PC-3 (cell line): ENCODE measurements at regions of chr3 and their contacts with region 1.

Region 1: DNA sequence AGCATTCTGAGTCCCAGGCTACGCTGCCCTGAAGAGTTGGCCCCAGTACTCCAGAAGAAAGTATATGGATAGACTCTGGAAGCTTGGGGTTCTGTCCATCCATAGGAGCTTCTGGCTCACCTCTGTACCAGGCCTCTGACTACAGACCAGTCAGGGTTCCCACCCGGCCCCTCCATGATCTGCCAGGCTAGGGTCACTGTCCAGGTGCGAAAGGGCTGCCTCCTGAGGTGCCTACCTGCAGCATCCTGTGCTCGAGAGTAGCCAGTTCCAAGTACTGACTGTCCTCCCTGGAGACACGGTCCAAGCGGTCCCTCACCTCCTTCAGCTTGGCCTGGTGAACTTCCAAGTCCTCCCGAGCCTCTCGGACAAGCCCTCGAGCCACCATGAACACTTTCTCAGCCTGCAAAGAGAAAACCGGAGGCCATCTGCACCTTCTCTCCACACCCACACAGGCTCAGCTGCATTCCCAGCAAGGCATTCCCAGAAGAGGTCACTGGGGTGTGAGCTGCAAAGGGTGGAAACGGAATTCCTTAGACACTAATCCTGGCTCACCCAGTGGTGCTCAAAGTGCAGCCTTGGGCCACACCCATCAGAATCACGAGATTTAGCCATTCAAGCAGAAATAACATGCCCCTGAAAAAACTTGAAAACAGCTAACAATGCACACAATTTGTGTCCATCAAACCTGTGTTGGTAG is 3.7 kb upstream of the PLXNB1 start:
- DNase-seq: peak; percentile 26
- ATAC-seq: no peak
- H3K4me3 ChIP-seq: no peak overlapping the region
- H3K27ac ChIP-seq: no peak overlapping the region
- H3K4me1 ChIP-seq: peaks cover 7% of the 10 kb centered on the region
- H3K27me3 ChIP-seq: no peaks in the 10 kb centered on the region
- CTCF ChIP-seq: no peak

Region 2: GRCh38 chr3:48400824-48401433 is 32.7 kb before region 1 on chr3:
- CTCF ChIA-PET with region 1: interaction called, 222 read pairs
- POLR2A ChIA-PET with region 1: interaction called, 4 read pairs
- intact Hi-C with region 1: loop called (anchors 1 kb)
- DNase-seq: peak; percentile 86
- ATAC-seq: peak; percentile 66
- H3K4me3 ChIP-seq: no peak overlapping the region
- H3K27ac ChIP-seq: no peak overlapping the region
- H3K4me1 ChIP-seq: peaks cover 11% of the 10 kb centered on the region; the same call in 1 of the 2 replicates
- H3K27me3 ChIP-seq: no peaks in the 10 kb centered on the region
- CTCF ChIP-seq: peak; percentile 82

Region 3: GRCh38 chr3:48656061-48656840 is 222.6 kb after region 1 on chr3:
- CTCF ChIA-PET with region 1: no interaction called
- POLR2A ChIA-PET with region 1: no interaction called
- intact Hi-C with region 1: no loop called
- DNase-seq: no peak
- ATAC-seq: no peak
- H3K4me3 ChIP-seq: no peak overlapping the region
- H3K27ac ChIP-seq: no peak overlapping the region
- H3K4me1 ChIP-seq: no peaks in the 10 kb centered on the region
- H3K27me3 ChIP-seq: no peaks in the 10 kb centered on the region
- CTCF ChIP-seq: no peak